ENCODE measurements at regions of chr17 and their contacts with region 1.

Region 1: GRCh38 chr17:60435244-60436167 is 13.2 kb downstream of the CHCT1 start:
- DNase-seq: peak; percentile 64
- ATAC-seq: peak; percentile 85
- H3K4me3 Mint-ChIP-seq: no peak overlapping the region
- H3K27ac Mint-ChIP-seq: no peak overlapping the region
- H3K4me1 Mint-ChIP-seq: no peaks in the 10 kb centered on the region
- H3K27me3 Mint-ChIP-seq: peaks cover 5% of the 10 kb centered on the region
- CTCF ChIP-seq: peak; percentile 90

Region 2: GRCh38 chr17:60102632-60103096 is 332.8 kb before region 1 on chr17:
- CTCF ChIA-PET with region 1: no interaction called
- POLR2A ChIA-PET with region 1: no interaction called
- intact Hi-C with region 1: loop called (anchors 10 kb)
- DNase-seq: peak; percentile 45
- ATAC-seq: peak; percentile 83
- H3K4me3 Mint-ChIP-seq: peak overlapping the region; percentile 62
- H3K27ac Mint-ChIP-seq: no peak overlapping the region
- H3K4me1 Mint-ChIP-seq: peaks cover 17% of the 10 kb centered on the region
- H3K27me3 Mint-ChIP-seq: peaks cover 27% of the 10 kb centered on the region
- CTCF ChIP-seq: no peak

Region 3: GRCh38 chr17:60142872-60143499 is 292.5 kb before region 1 on chr17:
- CTCF ChIA-PET with region 1: no interaction called
- POLR2A ChIA-PET with region 1: no interaction called
- intact Hi-C with region 1: loop called (anchors 10 kb)
- DNase-seq: peak; percentile 94
- ATAC-seq: peak; percentile 85
- H3K4me3 Mint-ChIP-seq: peak overlapping the region; percentile 30
- H3K27ac Mint-ChIP-seq: no peak overlapping the region
- H3K4me1 Mint-ChIP-seq: peaks cover 12% of the 10 kb centered on the region
- H3K27me3 Mint-ChIP-seq: peaks cover 89% of the 10 kb centered on the region
- CTCF ChIP-seq: peak; percentile 76